ENCODE measurements at regions of chr2 and their contacts with region 1.

Region 1: GRCh38 chr2:216391401-216391800 is 19.1 kb upstream of the MARCHF4 start:
- DNase-seq: no peak
- ATAC-seq: no peak
- H3K4me3 ChIP-seq: no peak overlapping the region
- H3K27ac ChIP-seq: no peak overlapping the region
- H3K4me1 ChIP-seq: peaks cover 0 to 12% (median 0%) of the 10 kb centered on the region in 12 donors
- H3K27me3 ChIP-seq: peaks cover 0 to 2% (median 0%) of the 10 kb centered on the region in 9 donors
- CTCF ChIP-seq: no peak
- POLR2A ChIP-seq: no peak

Region 2: DNA sequence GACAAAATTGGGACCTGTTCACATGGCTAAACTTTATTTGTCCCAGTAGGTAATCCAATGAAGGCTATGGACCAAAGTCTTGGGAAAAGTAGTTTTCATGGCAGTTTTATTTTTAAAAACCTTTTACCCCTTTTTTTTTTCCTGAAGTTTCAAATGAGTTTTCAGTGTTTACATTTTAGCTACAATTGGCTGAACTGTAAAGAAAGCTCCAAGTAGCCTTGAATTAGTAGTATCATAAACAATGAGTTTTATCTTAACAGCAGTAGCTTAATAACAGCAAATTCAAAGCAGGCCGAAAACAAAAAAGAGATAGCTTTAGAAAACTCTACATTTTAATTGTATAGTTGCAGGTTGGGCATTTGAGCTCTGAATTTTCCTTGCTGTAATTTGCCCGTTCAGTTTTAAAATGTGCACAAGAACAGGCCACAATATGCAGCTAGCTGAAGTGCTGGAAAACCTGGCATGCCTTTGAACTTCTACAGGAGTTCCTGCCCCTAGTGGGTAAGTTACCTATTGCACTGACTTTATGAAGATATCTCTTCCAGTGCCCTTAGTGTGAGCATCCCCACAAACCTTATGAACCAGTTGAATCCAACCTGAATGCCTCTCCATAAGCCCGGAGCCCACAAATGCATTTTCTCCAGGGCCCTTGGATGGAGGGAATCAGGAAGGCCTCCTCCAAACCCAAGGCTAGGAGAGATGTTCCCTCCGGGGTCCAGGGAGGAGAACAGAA is 175.6 kb before region 1 on chr2:
- intact Hi-C with region 1: loop called in 1 of 10 experiments (anchors 10 kb)
- DNase-seq: no peak
- ATAC-seq: no peak
- H3K4me3 ChIP-seq: no peak overlapping the region
- H3K27ac ChIP-seq: peak overlapping the region in 1 of 12 donors; percentile 2
- H3K4me1 ChIP-seq: peaks cover 0 to 20% (median 4%) of the 10 kb centered on the region in 12 donors
- H3K27me3 ChIP-seq: no peaks in the 10 kb centered on the region
- CTCF ChIP-seq: peak in 3 of 12 donors; percentile 12 to 18 (median 14)
- POLR2A ChIP-seq: no peak

Region 3: DNA sequence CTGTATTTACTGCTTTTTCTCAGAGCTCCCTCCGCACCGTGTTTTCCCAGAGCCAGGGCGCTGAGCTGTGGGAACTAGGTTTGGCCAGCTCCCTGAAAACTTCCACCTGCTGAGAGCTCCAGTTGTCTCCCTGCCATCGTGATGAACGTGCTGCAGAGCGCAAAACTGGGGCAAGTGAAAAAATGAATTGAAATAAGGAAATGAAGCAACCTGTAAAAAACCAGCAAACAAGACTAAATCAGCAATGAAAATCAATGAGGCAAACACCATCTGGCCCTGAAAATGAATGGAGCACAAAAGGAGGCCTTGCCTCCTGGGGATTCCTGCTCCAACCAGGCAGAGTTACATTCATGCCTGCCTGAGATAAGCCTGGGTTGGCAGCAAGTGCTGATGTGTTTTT is 149.0 kb before region 1 on chr2:
- intact Hi-C with region 1: loop called in 1 of 10 experiments (anchors 10 kb)
- DNase-seq: peak in 1 of 5 donors; percentile 36
- ATAC-seq: peak in 3 of 4 donors; percentile 24 to 49 (median 37)
- H3K4me3 ChIP-seq: no peak overlapping the region
- H3K27ac ChIP-seq: no peak overlapping the region
- H3K4me1 ChIP-seq: no peaks in the 10 kb centered on the region
- H3K27me3 ChIP-seq: no peaks in the 10 kb centered on the region
- CTCF ChIP-seq: no peak
- POLR2A ChIP-seq: no peak

Measured in heart left ventricle (tissue), 16 donors.